ENCODE measurements at regions of chr5 and their contacts with region 1.

Region 1: GRCh38 chr5:147098233-147098790 is 136.5 kb upstream of the STK32A start:
- DNase-seq: no peak

Region 2: DNA sequence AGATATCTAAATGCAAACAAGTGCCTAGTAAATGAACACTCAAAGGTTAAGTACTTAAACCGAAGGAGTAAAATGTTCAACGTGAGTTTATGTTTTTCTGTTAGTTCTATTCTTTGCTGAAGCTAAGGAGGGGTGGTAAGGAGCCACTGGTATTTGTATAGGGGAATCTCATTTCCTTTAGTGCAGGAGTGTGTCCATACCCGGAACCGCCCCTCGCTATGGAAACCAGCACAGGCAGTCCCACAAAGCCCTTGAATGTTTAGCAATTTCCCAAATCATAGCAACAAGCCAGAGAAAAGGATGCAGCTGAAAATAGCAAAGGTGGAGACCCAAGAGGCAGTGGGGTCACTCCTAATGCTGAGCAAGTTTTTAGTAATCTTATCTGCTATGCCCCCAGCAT is 57.7 kb after region 1 on chr5:
- intact Hi-C with region 1: loop called in 1 of 2 experiments (anchors 10 kb)
- DNase-seq: no peak

Region 3: DNA sequence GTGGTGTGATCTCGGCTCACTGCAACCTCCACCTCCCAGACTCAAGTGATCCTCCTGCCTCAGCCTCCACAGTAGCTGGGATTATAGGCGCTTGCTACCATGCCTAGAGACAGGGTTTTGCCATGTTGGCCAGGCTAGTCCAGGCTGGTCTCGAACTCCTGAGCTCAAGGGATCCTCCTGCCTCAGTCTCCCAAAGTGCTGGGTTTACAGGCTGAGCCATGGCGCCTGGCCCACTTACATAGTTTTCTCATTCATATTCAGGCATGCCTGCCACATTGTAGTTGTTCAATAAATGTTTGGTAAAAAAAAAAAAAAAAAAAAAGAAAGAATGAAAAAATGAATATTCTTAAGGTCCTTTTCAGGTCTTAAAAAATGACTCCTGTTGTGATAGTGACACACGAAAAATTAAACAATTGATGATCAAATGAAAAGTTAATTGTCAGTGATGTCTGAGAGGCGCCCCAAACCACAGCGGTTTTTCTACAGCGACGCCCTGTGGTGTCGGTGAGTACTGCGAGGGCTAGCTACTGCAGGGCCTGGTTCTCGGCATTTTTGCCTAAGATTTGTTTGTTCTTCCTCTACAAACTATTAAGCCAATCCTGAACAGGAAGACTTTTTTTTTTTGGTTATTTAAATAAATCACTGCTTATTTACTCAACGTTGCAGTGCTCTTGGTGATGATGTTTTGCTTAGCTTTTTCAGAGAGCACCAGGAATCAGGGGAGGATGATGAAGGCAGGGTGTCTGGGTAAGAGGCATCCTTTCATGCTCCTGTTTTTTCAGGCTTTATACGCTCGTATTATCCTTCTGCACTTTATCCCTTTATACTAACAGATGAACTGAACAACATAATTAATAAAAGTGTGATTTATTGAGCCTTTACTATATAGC is 478.6 kb after region 1 on chr5:
- intact Hi-C with region 1: loop called in 1 of 2 experiments (anchors 10 kb)
- DNase-seq: peak; percentile 89

Region 4: GRCh38 chr5:148383564-148384379 is 1285.5 kb after region 1 on chr5 and contains the start of gene FBXO38:
- intact Hi-C with region 1: no loop called
- DNase-seq: peak; percentile 99
- total RNA-seq, gene FBXO38: 39.4 to 39.6 TPM

Measured in posterior vena cava (tissue), 2 donors.